Activated T-helper 2 cell treated with anti-CD3 and anti-CD28 coated beads, Interferon-gamma antibody, Interleukin-2, Interleukin-4, amounts not matched to agents 10 μg/mL and 5 μg/mL and 100 μg/mL, durations not matched to agents 14 hours and 24 hours and 36 hours (primary cell): ENCODE measurements at regions of chr10 and their contacts with region 1.

Region 1: GRCh38 chr10:99620713-99621453 is 644 bp upstream of the SLC25A28 start:
- DNase-seq: peak; percentile 69
- H3K4me3 Mint-ChIP-seq: peak overlapping the region; percentile 90
- H3K27ac Mint-ChIP-seq: peak overlapping the region; percentile 90
- H3K4me1 Mint-ChIP-seq: peaks cover 45% of the 10 kb centered on the region
- H3K27me3 Mint-ChIP-seq: no peaks in the 10 kb centered on the region

Region 2: GRCh38 chr10:99430451-99431189 is 190.3 kb before region 1 on chr10 and contains the start of gene GOT1:
- intact Hi-C with region 1: loop called (anchors 1 kb)
- DNase-seq: peak; percentile 94
- H3K4me3 Mint-ChIP-seq: peak within 1 kb of the TSS; percentile 100
- H3K27ac Mint-ChIP-seq: peak within 1 kb of the TSS; percentile 94
- H3K4me1 Mint-ChIP-seq: peaks cover 25% of the 10 kb centered on the region
- H3K27me3 Mint-ChIP-seq: no peaks in the 10 kb centered on the region
- total RNA-seq, gene GOT1: 30.1 and 35.1 TPM in 2 replicates

Region 3: GRCh38 chr10:99682752-99683151 is 61.9 kb after region 1 on chr10:
- intact Hi-C with region 1: no loop called
- DNase-seq: no peak
- H3K4me3 Mint-ChIP-seq: no peak overlapping the region
- H3K27ac Mint-ChIP-seq: no peak overlapping the region
- H3K4me1 Mint-ChIP-seq: no peaks in the 10 kb centered on the region
- H3K27me3 Mint-ChIP-seq: no peaks in the 10 kb centered on the region

Region 4: DNA sequence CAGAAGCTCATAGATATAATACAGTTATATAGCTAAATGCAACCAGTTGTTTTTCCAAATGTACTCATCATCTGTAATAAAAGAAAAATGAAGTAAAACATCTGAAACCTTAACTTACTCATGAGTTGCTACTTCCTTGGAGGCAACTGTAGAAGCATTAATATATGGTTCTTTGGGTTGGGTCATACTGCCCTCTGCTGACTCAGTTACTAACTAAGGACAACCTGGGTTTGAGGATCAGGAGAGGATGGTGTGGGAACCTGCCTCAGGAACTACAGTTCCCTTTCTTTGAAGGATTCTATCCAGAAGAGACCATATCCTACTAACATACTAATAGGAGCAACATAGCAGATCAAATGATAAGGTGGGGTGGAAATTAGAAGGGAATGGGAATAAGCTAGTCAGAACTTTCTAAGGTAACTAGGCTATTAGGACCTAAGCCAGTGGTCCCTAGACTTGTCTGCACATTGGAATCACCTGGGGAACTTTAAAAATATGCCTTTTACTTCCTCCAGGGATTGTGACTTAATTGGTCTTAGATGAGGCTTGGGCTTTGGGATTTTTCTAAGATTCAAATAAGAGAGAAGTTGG is 90.3 kb after region 1 on chr10:
- intact Hi-C with region 1: loop called (anchors 5 kb)
- DNase-seq: peak; percentile 13
- H3K4me3 Mint-ChIP-seq: no peak overlapping the region
- H3K27ac Mint-ChIP-seq: no peak overlapping the region
- H3K4me1 Mint-ChIP-seq: peaks cover 12% of the 10 kb centered on the region
- H3K27me3 Mint-ChIP-seq: no peaks in the 10 kb centered on the region

Region 5: GRCh38 chr10:100009793-100010676 is 389.2 kb after region 1 on chr10 and contains the start of gene DNMBP:
- intact Hi-C with region 1: loop called (anchors 5 kb)
- DNase-seq: peak; percentile 76
- H3K4me3 Mint-ChIP-seq: peak within 1 kb of the TSS; percentile 83
- H3K27ac Mint-ChIP-seq: no peak within 1 kb of the TSS
- H3K4me1 Mint-ChIP-seq: peaks cover 41% of the 10 kb centered on the region
- H3K27me3 Mint-ChIP-seq: peaks cover 45% of the 10 kb centered on the region
- total RNA-seq, gene DNMBP: 1.0 and 1.2 TPM in 2 replicates